ENCODE measurements at regions of chr2 and their contacts with region 1.

Region 1: GRCh38 chr2:157596992-157597681 is 31.5 kb downstream of the ACVR1C start:
- DNase-seq: peak in 2 of 3 donors; percentile 5 to 16
- H3K4me3 ChIP-seq: peak overlapping the region in 1 of 3 experiments; percentile 49
- H3K4me3 Mint-ChIP-seq: peak overlapping the region; percentile 52 to 73
- H3K27ac ChIP-seq: no peak overlapping the region
- H3K27ac Mint-ChIP-seq: no peak overlapping the region
- H3K4me1 ChIP-seq: peaks cover 3 to 6% of the 10 kb centered on the region in 2 donors
- H3K4me1 Mint-ChIP-seq: peaks cover 5% of the 10 kb centered on the region
- H3K27me3 ChIP-seq: peaks cover 0 to 12% of the 10 kb centered on the region in 2 donors
- H3K27me3 Mint-ChIP-seq: peaks cover 4 to 13% (median 12%) of the 10 kb centered on the region in 3 donors
- CTCF ChIP-seq: peak; percentile 56

Region 2: DNA sequence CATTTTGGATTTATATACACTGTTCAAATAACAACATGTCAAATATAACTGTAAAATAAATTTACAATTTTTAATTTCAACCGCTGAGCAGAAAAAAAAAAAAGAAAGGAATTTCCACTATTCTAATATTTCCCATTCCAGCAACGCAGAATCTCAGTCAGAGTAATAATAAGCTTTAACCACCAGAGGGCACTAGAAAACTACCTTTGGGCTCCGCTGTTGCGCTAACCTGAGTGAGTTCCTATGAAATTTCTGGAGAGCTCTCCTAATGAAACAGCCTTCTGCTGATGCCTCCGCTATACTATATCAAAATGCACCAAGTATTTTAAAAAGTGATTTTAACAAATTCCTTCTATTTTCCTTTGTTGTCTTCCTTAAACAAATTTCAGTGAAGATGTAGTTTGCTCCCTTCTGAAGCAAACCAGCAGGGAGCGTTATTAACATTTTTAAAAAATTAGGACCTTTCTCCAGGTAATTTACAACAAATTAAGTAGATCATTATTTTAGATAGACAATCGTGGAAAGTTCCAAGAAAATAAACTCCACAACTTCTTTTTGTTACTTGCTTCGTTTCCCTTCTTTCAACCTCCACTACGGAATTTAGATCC is 294.5 kb before region 1 on chr2:
- intact Hi-C with region 1: loop called in 1 of 2 experiments (anchors 10 kb)
- DNase-seq: peak; percentile 33 to 71 (median 52)
- H3K4me3 ChIP-seq: no peak overlapping the region
- H3K4me3 Mint-ChIP-seq: no peak overlapping the region
- H3K27ac ChIP-seq: no peak overlapping the region
- H3K27ac Mint-ChIP-seq: no peak overlapping the region
- H3K4me1 ChIP-seq: peaks cover 0 to 12% of the 10 kb centered on the region in 2 donors
- H3K4me1 Mint-ChIP-seq: peaks cover 12% of the 10 kb centered on the region
- H3K27me3 ChIP-seq: peaks cover 0 to 4% of the 10 kb centered on the region in 2 donors
- H3K27me3 Mint-ChIP-seq: peaks cover 0 to 4% (median 1%) of the 10 kb centered on the region in 3 donors
- CTCF ChIP-seq: peak; percentile 90

Region 3: DNA sequence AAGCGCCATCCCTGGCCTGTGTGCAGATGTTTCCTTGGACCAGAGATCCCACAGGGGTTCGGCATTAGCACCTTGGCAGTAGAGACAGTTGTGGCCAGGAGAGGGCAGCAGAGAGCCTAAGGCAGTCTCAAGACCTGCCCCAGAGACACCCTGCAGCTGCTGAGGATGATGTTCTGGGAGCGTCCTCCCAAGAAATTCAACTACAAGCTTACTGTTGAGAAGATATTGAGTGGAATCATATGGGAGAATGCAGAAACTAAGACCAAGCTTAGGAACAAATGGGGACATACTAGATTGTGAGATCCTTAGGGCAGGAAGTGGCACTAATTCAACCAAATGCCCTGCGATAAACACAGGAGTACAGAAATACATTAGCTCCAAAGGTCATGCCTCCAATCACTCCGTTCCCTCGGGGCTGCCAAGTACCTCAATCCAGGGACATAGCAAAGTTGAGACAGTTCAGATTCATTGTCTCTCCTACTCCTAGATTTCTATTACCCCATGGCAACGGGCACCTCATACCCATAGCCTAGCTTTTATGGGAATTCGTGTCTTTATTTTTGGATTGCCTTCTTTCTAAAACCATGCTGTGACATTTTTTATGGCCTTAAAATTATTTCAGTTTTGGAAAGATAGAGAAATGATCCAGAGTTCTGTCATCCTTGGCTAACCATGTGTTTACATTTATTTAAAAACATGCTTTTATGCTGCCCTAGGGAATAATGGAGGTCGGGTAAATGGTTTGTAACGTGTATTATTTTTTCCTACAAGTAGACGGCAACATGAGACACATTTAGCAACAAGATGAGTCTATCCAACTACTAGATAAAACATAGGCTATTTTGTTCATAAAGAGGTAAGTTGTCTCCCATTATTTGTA is 269.3 kb before region 1 on chr2:
- intact Hi-C with region 1: loop called in 1 of 2 experiments (anchors 5 kb)
- DNase-seq: peak; percentile 62 to 73 (median 72)
- H3K4me3 ChIP-seq: no peak overlapping the region
- H3K4me3 Mint-ChIP-seq: no peak overlapping the region
- H3K27ac ChIP-seq: no peak overlapping the region
- H3K27ac Mint-ChIP-seq: peak overlapping the region in 1 of 7 donors; percentile 17
- H3K4me1 ChIP-seq: no peaks in the 10 kb centered on the region
- H3K4me1 Mint-ChIP-seq: peaks cover 4% of the 10 kb centered on the region
- H3K27me3 ChIP-seq: no peaks in the 10 kb centered on the region
- H3K27me3 Mint-ChIP-seq: peaks cover 2 to 3% (median 2%) of the 10 kb centered on the region in 3 donors
- CTCF ChIP-seq: peak; percentile 95

Region 4: DNA sequence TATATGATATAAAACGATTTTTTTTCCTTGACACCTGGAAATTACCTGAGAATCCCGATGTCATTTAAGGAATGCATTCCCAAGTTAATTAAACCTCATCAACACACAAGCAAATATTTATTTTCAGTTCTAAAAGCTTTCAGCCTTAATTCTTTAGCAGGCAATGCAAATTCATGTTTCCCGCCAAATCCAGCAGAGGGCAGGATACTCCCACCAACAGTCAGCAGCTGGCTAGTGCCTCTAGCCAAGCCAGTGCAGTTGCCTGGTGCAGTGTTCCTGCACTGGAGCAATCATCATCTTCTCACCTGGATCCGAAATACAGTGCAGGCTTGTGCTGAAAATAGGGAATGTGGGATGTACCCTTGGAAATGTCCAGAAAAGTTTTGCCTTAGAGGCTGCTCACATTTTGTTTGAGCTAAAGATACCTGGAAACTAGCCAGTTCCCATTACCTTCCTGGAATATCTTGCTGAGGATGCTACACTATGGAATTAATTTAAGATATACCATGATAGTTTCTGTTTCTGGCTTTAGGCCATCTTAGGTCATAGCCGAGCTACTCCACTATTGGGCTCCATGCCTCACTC is 104.9 kb before region 1 on chr2:
- intact Hi-C with region 1: loop called (anchors 5 to 10 kb)
- DNase-seq: peak; percentile 51 to 78 (median 65)
- H3K4me3 ChIP-seq: no peak overlapping the region
- H3K4me3 Mint-ChIP-seq: no peak overlapping the region
- H3K27ac ChIP-seq: no peak overlapping the region
- H3K27ac Mint-ChIP-seq: peak overlapping the region in 1 of 7 donors; percentile 27
- H3K4me1 ChIP-seq: peaks cover 8 to 10% of the 10 kb centered on the region in 2 donors
- H3K4me1 Mint-ChIP-seq: peaks cover 10% of the 10 kb centered on the region
- H3K27me3 ChIP-seq: no peaks in the 10 kb centered on the region
- H3K27me3 Mint-ChIP-seq: no peaks in the 10 kb centered on the region
- CTCF ChIP-seq: peak; percentile 86

Region 5: DNA sequence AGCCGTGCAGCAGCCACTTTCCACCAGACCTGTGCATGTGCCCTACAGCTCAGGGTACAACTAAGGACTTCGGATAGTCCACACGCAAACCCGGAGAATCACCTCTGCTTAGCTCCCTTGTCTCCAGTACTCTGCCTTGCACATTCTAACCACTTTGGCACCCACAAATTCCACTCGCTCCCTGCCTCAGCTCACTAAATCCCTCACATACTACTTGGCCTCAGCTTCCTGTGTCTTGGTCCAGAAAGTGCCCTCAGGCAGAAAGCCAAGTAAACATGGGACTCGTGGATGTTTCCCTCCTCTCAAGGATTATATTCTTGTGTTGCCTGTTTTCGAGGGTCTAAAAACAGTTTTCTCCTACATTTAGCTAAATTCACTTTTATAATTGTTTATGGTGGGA is 1040.2 kb after region 1 on chr2:
- intact Hi-C with region 1: no loop called
- DNase-seq: no peak
- H3K4me3 ChIP-seq: no peak overlapping the region
- H3K4me3 Mint-ChIP-seq: no peak overlapping the region
- H3K27ac ChIP-seq: no peak overlapping the region
- H3K27ac Mint-ChIP-seq: peak overlapping the region in 1 of 7 donors; percentile 47
- H3K4me1 ChIP-seq: no peaks in the 10 kb centered on the region
- H3K4me1 Mint-ChIP-seq: no peaks in the 10 kb centered on the region
- H3K27me3 ChIP-seq: no peaks in the 10 kb centered on the region
- H3K27me3 Mint-ChIP-seq: no peaks in the 10 kb centered on the region
- CTCF ChIP-seq: no peak

Measured in CD14-positive monocyte (primary cell).